Breast epithelium (tissue), 4 donors: ENCODE measurements at regions of chr14 and their contacts with region 1.

Region 1: DNA sequence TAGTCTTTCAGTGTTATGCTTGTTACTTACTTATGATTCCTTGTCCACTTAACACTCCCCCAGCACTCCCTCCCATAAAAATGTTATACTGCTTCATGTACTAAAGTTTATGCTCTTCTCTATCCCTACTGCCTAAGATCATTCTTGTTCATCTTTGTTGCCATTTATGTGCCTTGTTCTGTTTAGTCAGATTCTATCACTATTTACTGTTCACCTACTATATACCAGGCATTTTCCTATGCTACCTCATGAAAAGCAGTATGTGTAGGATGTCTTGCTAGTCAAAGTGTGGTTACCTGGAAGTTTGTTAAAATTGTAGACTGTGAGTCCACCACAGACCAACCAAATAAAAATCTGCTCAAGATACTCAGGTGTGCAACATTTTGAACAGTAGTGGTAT is 23.9 kb downstream of the ERH start:
- DNase-seq: no peak
- H3K4me3 ChIP-seq: no peak overlapping the region
- H3K27ac ChIP-seq: no peak overlapping the region
- H3K4me1 ChIP-seq: no peaks in the 10 kb centered on the region
- H3K27me3 ChIP-seq: no peaks in the 10 kb centered on the region
- CTCF ChIP-seq: no peak
- POLR2A ChIP-seq: no peak

Region 2: GRCh38 chr14:69405762-69406161 is 31.5 kb after region 1 on chr14:
- intact Hi-C with region 1: loop called (anchors 2 kb)
- DNase-seq: no peak
- H3K4me3 ChIP-seq: no peak overlapping the region
- H3K27ac ChIP-seq: no peak overlapping the region
- H3K4me1 ChIP-seq: no peaks in the 10 kb centered on the region
- H3K27me3 ChIP-seq: no peaks in the 10 kb centered on the region
- CTCF ChIP-seq: no peak
- POLR2A ChIP-seq: no peak